BJ (cell line): ENCODE measurements at regions of chr7 and their contacts with region 1.

Region 1: DNA sequence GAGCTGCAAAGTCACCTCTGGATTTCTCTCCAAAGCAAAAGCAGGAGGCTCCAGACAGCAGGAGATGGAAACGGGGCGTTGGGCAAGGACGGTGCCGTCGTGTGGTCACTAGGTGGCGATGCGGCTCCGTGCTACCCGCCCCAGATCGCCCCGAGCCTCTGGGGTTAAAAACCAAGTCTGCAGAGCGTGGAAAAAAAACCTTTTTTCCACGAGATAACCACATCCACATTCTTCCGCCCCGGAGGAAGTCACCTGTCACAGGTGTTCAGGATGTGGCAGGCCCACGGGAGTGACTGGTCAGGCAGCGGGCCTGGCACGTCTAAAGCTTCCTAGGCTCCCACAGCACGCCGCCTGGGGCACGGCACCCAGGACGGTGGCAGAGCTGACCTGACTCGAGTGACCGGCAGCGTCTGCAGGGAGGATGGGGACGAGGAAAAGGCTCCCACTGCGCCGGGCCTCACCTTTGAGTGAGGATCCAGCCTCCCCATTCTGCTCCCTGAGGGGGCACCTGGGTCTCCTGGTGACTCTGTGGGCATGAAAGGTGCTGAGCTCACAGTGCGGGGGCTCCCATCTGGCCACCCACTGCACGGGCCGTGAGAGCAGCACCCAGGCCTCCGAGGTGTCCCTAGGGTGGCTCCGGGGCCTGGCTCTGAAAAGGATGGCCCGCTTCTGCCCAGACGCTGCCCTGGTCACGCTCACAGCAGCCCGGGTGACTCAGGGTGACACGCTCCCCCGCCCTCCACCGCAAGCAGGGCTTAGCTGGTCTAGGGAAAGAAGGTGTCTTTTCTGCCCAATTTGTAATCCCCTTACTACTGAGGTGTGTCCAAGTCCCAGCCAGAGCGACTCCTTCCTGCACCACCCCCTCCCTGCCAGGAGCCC is 71.3 kb upstream of the TNRC18 start:
- DNase-seq: no peak
- H3K4me3 ChIP-seq: no peak overlapping the region
- H3K27me3 ChIP-seq: no peaks in the 10 kb centered on the region
- CTCF ChIP-seq: peak; percentile 96

Region 2: DNA sequence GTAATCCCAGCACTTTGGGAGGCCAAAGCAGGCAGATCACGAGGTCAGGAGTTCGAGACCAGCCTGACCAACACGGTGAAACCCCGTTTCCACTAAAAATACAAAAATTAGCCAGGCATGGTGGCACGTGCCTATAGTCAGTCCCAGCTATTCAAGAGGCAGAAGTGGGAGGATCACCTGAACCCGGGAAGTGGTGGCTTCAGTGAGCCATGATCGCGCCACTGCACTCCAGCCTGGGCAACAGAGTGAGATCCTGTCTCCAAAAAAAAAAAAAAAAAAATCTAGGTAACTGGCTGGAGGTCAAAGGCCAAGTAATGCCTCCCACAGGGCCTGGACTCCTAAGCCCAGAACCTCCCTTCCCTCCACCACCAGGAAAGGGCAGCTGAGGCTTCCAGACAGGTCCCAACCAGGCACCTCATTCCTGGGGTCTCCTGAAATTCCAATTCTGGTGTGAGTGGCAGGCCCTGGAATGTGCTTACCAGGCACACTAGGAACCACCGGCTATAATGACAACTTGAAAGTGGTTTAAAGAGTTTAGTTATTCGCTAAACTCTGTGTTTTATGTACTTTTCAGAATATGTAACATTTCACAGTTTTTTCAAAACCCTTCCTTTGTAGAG is 15.6 kb after region 1 on chr7:
- CTCF ChIA-PET with region 1: interaction called, 12 read pairs
- POLR2A ChIA-PET with region 1: no interaction called
- DNase-seq: no peak
- H3K4me3 ChIP-seq: no peak overlapping the region
- H3K27me3 ChIP-seq: no peaks in the 10 kb centered on the region
- CTCF ChIP-seq: no peak

Region 3: DNA sequence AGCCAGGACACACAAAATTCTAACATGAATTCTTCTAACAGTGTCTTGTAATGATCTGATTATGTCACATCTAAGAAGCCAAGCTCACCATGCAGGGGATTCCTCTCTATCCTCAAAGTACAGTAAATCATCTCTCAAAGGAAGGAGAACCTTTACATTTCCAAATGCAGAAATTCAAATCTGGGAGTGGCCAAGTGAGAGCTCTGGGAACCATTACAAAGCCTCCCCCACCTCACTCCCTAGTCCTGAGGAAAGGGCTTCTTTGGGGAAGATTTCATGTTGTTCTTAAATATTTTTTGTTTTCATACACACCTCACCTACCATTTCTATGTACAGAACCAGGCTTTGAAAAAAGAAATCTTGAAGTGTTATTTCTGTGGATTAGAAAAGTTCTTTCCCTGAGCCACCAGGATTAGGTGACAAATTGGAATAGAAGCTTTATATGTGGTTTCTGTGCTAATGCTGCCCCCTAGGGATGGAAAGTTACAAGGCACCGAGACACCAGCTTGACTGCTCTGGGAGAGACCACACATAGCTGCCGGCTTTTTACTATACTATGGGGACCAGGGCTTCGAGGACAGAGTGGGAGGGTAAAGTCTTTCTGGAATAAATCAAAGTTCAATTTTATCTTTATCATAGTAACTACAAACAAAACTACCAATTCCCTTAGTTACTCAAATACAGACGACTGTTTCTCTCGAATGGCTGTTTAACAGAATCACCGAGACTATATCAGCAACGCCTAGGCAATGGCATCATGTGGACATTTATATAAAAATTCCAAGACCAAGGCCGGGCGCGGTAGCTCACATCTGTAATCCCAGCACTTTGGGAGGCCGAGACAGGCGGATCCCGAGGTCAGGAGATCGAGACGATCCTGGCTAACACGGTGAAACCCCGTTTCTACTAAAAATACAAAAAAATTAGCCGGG is 170.4 kb after region 1 on chr7:
- CTCF ChIA-PET with region 1: interaction called, 41 read pairs
- POLR2A ChIA-PET with region 1: no interaction called
- DNase-seq: no peak
- H3K4me3 ChIP-seq: no peak overlapping the region
- H3K27me3 ChIP-seq: no peaks in the 10 kb centered on the region
- CTCF ChIP-seq: peak; percentile 80

Region 4: DNA sequence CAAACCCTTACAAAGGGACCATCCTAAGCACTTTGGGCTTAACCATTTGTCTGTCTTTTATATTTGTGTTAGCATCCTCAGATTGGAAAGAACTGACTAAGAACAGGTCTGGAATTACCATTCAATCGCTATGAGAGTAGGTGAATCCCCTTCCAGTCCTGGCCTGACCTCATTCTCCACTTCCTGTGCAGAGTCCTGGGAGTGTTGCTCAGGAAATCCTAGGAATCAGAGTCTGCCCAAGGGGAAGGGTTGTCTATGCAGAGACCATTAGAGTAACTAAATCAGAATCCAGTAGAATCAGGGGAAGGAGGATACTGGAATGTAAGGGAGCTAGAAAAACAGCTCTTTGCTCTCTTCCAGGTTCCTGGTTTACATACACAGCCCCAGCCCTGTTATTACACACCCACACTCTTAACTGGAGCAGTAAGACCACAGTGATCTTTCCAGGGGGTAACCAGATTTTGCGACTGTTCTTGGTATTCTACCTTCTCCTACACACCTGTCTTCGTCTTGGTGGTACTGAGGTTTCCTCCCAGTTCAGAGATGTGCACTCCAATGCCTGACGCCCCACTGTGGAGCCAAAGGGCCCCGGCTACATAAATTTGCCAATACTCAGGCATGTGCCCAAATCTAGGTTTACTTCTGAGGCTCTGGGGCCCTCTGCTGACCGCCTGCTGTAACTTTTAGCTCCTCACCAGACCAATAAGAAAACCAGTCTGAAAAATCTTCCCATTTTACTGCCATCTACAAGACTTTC is 182.8 kb after region 1 on chr7:
- CTCF ChIA-PET with region 1: interaction called, 22 read pairs
- POLR2A ChIA-PET with region 1: no interaction called
- DNase-seq: no peak
- H3K4me3 ChIP-seq: no peak overlapping the region
- H3K27me3 ChIP-seq: no peaks in the 10 kb centered on the region
- CTCF ChIP-seq: peak; percentile 84

Region 5: GRCh38 chr7:5694912-5695726 is 200.2 kb after region 1 on chr7:
- CTCF ChIA-PET with region 1: interaction called, 12 read pairs
- POLR2A ChIA-PET with region 1: no interaction called
- DNase-seq: peak; percentile 53
- H3K4me3 ChIP-seq: peak overlapping the region; percentile 19
- H3K27me3 ChIP-seq: no peaks in the 10 kb centered on the region
- CTCF ChIP-seq: no peak

Region 6: DNA sequence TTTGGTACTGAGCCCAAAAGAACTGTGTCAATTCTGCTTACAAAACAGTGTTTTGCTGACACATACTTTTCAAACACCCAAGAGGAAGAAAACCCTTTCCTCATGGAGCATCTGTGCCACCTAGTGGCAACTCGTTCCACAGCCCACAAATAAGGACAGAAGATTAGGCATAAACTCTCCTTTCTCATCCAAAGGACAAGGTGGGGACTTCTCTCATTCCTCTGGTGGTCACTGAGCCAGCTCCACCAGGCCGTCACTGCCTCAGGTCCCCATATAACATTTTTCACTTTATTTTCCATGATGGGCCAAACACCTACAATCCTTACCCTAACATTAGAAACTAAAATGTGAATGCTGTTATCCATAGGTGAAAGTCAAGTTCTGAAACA is 209.6 kb after region 1 on chr7:
- CTCF ChIA-PET with region 1: interaction called, 23 read pairs
- POLR2A ChIA-PET with region 1: no interaction called
- DNase-seq: peak; percentile 41
- H3K4me3 ChIP-seq: no peak overlapping the region
- H3K27me3 ChIP-seq: no peaks in the 10 kb centered on the region
- CTCF ChIP-seq: peak; percentile 91